Activated CD4-positive, alpha-beta memory T cell treated with anti-CD3 and anti-CD28 coated beads for 36 hours (primary cell): ENCODE measurements at regions of chr3 and their contacts with region 1.

Region 1: GRCh38 chr3:4504340-4505261 is 11.5 kb downstream of the ITPR1 start:
- DNase-seq: peak; percentile 44
- H3K4me3 Mint-ChIP-seq: peak overlapping the region; percentile 75
- H3K27ac Mint-ChIP-seq: peak overlapping the region; percentile 84
- H3K4me1 Mint-ChIP-seq: peaks cover 50% of the 10 kb centered on the region
- H3K27me3 Mint-ChIP-seq: no peaks in the 10 kb centered on the region

Region 2: DNA sequence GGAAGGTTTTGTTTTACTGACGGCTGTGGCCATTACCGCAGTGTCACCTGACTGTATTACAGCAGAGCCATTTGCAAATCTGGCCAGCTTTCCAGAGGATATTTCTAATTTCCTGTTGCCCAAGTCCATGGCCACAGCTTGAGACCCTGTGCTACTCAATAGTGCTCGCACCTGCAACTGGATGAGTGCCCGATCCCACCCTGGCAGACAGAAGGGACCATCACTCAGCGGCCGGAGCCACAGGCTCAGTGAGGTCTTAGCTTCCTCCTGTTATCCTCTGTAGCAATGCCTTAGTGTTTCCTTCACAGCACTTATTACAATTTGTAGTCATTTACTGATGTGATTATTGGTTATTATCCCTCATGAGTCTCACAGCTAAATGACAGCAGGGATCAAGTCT is 520.5 kb before region 1 on chr3:
- CTCF ChIA-PET with region 1: no interaction called
- POLR2A ChIA-PET with region 1: no interaction called
- intact Hi-C with region 1: no loop called
- DNase-seq: no peak
- H3K4me3 Mint-ChIP-seq: no peak overlapping the region
- H3K27ac Mint-ChIP-seq: no peak overlapping the region
- H3K4me1 Mint-ChIP-seq: no peaks in the 10 kb centered on the region
- H3K27me3 Mint-ChIP-seq: no peaks in the 10 kb centered on the region

Region 3: DNA sequence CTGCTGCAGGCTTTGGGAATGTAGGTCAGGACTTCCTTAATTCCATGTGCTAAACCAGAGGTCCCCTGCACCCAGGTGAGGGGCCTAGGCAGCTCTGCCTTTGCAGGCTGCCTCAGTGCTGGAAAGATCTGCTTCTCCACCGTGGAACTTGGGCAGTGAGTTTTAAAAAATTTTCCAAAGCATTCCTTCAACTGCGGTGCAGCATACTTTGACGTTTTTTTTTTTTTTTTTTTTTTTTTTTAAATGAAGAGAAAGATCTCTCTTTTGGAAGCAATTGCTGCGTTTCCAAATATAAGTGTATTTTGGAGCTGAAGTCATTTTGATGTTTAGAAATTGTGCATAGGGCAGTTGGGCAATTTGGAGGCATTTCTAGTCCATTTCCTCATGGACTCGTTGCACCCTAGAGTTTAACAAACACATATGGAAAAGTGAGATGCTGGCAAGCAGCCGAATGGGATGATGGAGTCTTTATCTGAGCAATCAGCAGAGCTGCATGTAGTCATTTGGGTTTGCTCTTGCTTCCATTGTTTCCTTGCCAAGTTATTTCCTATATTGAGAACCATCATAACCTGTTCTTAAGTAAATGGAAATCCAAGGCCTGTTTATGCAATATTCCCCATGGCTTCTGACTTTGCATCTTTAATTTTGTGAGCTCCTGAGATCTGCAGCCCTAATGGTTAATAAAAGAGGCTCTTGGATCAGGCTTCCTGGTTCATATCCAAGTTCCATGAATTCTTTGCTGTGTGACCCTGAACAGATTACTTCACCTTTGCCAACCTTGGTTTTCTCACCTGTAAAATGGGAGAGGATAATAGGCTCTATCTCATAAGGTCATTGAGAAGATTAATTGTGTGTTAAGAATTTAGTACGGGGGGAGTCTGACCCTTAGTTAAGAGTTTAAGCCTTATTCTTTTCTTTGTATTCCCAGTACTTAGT is 19.8 kb after region 1 on chr3:
- CTCF ChIA-PET with region 1: interaction called, 15 read pairs
- POLR2A ChIA-PET with region 1: no interaction called
- intact Hi-C with region 1: loop called (anchors 1 kb)
- DNase-seq: no peak
- H3K4me3 Mint-ChIP-seq: no peak overlapping the region
- H3K27ac Mint-ChIP-seq: no peak overlapping the region
- H3K4me1 Mint-ChIP-seq: peaks cover 5% of the 10 kb centered on the region
- H3K27me3 Mint-ChIP-seq: no peaks in the 10 kb centered on the region

Region 4: GRCh38 chr3:4551051-4551711 is 46.6 kb after region 1 on chr3:
- CTCF ChIA-PET with region 1: no interaction called
- POLR2A ChIA-PET with region 1: no interaction called
- intact Hi-C with region 1: no loop called
- DNase-seq: no peak
- H3K4me3 Mint-ChIP-seq: no peak overlapping the region
- H3K27ac Mint-ChIP-seq: no peak overlapping the region
- H3K4me1 Mint-ChIP-seq: no peaks in the 10 kb centered on the region
- H3K27me3 Mint-ChIP-seq: no peaks in the 10 kb centered on the region